ENCODE measurements at regions of chr13 and their contacts with region 1.

Region 1: GRCh38 chr13:75612354-75612753 is 23.8 kb upstream of the LMO7 start:
- DNase-seq: no peak
- H3K4me3 ChIP-seq: no peak overlapping the region
- H3K27ac ChIP-seq: no peak overlapping the region
- H3K4me1 ChIP-seq: no peaks in the 10 kb centered on the region
- H3K27me3 ChIP-seq: no peaks in the 10 kb centered on the region
- CTCF ChIP-seq: no peak
- POLR2A ChIP-seq: no peak

Region 2: GRCh38 chr13:75724752-75725504 is 112.6 kb after region 1 on chr13:
- intact Hi-C with region 1: no loop called
- DNase-seq: no peak
- H3K4me3 ChIP-seq: no peak overlapping the region
- H3K27ac ChIP-seq: no peak overlapping the region
- H3K4me1 ChIP-seq: no peaks in the 10 kb centered on the region
- H3K27me3 ChIP-seq: no peaks in the 10 kb centered on the region
- CTCF ChIP-seq: no peak
- POLR2A ChIP-seq: no peak

Region 3: DNA sequence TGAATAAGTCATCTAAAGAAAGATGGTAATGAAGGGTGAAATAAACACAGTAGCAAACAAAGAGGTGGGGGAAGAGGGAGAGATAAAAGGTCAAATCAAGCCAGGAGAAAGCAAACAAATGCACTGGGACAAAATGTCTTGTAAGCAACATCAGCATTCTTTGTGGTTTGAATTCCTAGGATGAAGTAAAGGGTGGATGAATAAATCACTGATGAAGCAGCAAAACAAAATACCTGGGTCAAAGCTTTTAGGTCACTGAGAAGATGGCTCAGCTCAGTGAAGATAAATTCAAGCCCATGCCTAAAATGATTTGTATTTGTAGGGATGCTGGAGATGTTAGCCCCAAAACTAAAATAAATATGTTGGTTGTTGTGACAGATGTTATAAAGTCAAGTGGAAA is 1501.1 kb after region 1 on chr13:
- intact Hi-C with region 1: loop called (anchors 5 kb)
- DNase-seq: no peak
- H3K4me3 ChIP-seq: no peak overlapping the region
- H3K27ac ChIP-seq: no peak overlapping the region
- H3K4me1 ChIP-seq: no peaks in the 10 kb centered on the region
- H3K27me3 ChIP-seq: no peaks in the 10 kb centered on the region
- CTCF ChIP-seq: no peak
- POLR2A ChIP-seq: no peak

Measured in vagina (tissue), 2 donors.